ENCODE measurements at regions of chr11 and their contacts with region 1.

Region 1: GRCh38 chr11:119067371-119068222 is at the start of gene VPS11:
- DNase-seq: peak; percentile 98
- H3K4me3 Mint-ChIP-seq: peak within 1 kb of the TSS; percentile 98
- H3K27ac Mint-ChIP-seq: peak within 1 kb of the TSS; percentile 98
- H3K4me1 Mint-ChIP-seq: peaks cover 39% of the 10 kb centered on the region
- H3K27me3 Mint-ChIP-seq: no peaks in the 10 kb centered on the region
- total RNA-seq, gene VPS11: 30.6 to 36.1 TPM

Region 2: DNA sequence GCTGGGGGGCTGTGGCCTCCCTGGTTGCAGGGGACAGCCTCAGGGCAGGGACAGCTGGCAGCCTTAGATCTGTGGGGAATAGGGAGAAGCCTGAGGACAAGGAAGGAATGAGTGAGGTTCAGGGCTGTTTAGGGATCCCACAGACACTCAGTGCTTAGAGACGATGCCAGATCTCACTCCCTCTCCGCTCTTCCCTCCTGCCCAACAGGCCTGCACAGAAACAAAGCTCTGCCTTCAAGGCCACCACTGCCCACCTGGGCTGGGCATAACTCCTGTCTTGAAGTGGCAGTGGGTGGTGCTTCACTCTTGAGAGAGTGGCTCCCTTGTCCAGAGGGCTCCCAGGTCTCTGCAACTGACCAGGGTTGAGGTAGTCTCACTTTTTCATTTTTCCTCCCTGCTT is 82.8 kb before region 1 on chr11:
- CTCF ChIA-PET with region 1: no interaction called
- POLR2A ChIA-PET with region 1: no interaction called
- DNase-seq: no peak
- H3K4me3 Mint-ChIP-seq: no peak overlapping the region
- H3K27ac Mint-ChIP-seq: no peak overlapping the region
- H3K4me1 Mint-ChIP-seq: no peaks in the 10 kb centered on the region
- H3K27me3 Mint-ChIP-seq: no peaks in the 10 kb centered on the region

Region 3: GRCh38 chr11:118997627-118998387 is 69.8 kb before region 1 on chr11 and contains the start of gene CENATAC:
- CTCF ChIA-PET with region 1: no interaction called
- POLR2A ChIA-PET with region 1: interaction called, 10 read pairs
- DNase-seq: peak; percentile 98
- H3K4me3 Mint-ChIP-seq: peak within 1 kb of the TSS; percentile 99
- H3K27ac Mint-ChIP-seq: peak within 1 kb of the TSS; percentile 95
- H3K4me1 Mint-ChIP-seq: peaks cover 36% of the 10 kb centered on the region
- H3K27me3 Mint-ChIP-seq: no peaks in the 10 kb centered on the region
- total RNA-seq, gene CENATAC: 34.6 to 35.0 TPM

Region 4: DNA sequence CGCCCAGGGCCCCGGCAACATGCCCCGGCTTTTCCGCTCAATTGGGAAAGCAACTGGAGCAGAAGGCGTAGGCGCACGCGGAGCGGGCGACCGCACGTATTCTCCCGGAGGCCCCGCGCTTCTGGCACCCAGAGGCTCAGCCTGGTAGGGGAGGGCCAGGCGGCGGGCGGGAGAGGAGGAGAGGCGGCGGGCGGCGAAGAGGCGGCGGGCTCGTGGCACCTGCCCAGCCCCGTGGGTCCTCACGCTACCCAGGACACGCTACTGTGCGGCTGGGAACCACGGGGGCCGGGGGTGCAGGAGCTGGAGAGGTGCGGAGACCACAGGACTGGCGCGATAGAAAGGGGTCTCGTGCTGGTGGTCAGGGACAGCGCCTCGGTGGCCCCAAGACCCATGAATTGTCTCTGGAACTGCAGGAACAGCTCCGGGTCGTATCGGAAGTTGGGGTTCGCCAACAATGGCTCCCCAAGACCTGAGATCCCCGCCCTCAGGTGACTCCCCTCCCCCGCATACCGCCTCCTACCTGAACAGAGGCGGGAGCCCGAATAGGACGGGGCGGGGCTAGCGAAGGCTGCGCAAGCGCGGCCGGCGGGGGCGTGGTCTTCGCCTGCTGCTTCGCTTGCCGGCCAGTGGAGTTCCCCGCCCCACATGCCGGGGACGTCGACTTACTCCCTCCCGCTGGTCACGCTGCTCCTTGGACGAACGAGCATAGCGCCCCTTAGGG is 37.1 kb before region 1 on chr11 and contains the start of gene SLC37A4:
- CTCF ChIA-PET with region 1: interaction called, 7 read pairs
- POLR2A ChIA-PET with region 1: interaction called, 18 read pairs
- DNase-seq: peak; percentile 98
- H3K4me3 Mint-ChIP-seq: peak within 1 kb of the TSS; percentile 77
- H3K27ac Mint-ChIP-seq: peak within 1 kb of the TSS; percentile 78
- H3K4me1 Mint-ChIP-seq: peaks cover 29% of the 10 kb centered on the region
- H3K27me3 Mint-ChIP-seq: no peaks in the 10 kb centered on the region
- total RNA-seq, gene SLC37A4: 31.6 to 33.9 TPM

Region 5: DNA sequence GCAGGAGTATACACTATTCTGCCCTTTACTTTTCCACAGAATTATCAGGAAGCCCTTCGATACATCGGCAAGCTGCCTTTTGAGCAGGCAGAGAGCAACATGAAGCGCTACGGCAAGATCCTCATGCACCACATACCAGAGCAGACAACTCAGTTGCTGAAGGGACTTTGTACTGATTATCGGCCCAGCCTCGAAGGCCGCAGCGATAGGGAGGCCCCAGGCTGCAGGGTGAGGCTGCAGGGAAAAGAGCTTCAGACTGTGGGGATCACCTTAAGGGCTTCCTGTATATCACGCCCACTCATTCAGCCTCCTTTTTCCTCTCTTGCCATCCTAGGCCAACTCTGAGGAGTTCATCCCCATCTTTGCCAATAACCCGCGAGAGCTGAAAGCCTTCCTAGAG is 10.2 kb after region 1 on chr11:
- CTCF ChIA-PET with region 1: interaction called, 3 read pairs
- POLR2A ChIA-PET with region 1: interaction called, 14 read pairs
- DNase-seq: no peak
- H3K4me3 Mint-ChIP-seq: no peak overlapping the region
- H3K27ac Mint-ChIP-seq: no peak overlapping the region
- H3K4me1 Mint-ChIP-seq: no peaks in the 10 kb centered on the region
- H3K27me3 Mint-ChIP-seq: no peaks in the 10 kb centered on the region

Region 6: GRCh38 chr11:119095066-119095880 is 27.7 kb after region 1 on chr11:
- CTCF ChIA-PET with region 1: interaction called, 16 read pairs
- POLR2A ChIA-PET with region 1: interaction called, 105 read pairs
- DNase-seq: peak; percentile 100
- H3K4me3 Mint-ChIP-seq: peak overlapping the region; percentile 93
- H3K27ac Mint-ChIP-seq: peak overlapping the region; percentile 86
- H3K4me1 Mint-ChIP-seq: peaks cover 70% of the 10 kb centered on the region
- H3K27me3 Mint-ChIP-seq: no peaks in the 10 kb centered on the region

Region 7: GRCh38 chr11:119196833-119197483 is 129.4 kb after region 1 on chr11:
- CTCF ChIA-PET with region 1: interaction called, 14 read pairs
- POLR2A ChIA-PET with region 1: no interaction called
- DNase-seq: peak; percentile 70
- H3K4me3 Mint-ChIP-seq: no peak overlapping the region
- H3K27ac Mint-ChIP-seq: no peak overlapping the region
- H3K4me1 Mint-ChIP-seq: peaks cover 3% of the 10 kb centered on the region
- H3K27me3 Mint-ChIP-seq: peaks cover 6% of the 10 kb centered on the region

Region 8: DNA sequence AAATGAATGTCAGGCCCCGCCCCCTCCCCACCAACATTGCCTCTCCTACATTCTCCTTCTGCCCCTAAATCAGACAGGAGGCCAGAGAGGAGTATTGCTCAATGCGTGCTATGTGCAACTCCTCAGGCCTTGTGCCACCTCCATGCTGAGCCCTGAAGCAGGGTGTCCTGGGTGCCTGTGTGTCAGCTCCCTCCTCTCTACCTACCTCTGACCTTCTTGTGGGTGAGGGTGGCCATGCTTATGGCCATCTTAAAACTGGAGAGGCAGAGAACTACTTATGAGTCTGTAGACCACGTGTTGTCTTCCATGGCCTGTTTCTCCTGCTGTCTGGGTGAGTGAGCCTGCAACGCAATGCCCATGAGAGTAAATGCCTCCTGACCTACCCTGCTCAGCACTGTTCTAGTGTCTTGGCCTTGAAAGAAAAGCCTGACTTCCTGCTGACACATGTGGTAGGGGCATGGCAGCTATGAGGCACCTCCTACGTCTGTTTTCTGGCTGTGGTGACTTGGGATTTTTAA is 238.8 kb after region 1 on chr11:
- CTCF ChIA-PET with region 1: no interaction called
- POLR2A ChIA-PET with region 1: no interaction called
- DNase-seq: no peak
- H3K4me3 Mint-ChIP-seq: no peak overlapping the region
- H3K27ac Mint-ChIP-seq: peak overlapping the region; percentile 67
- H3K4me1 Mint-ChIP-seq: peaks cover 20% of the 10 kb centered on the region
- H3K27me3 Mint-ChIP-seq: no peaks in the 10 kb centered on the region

Measured in activated CD4-positive, alpha-beta memory T cell treated with anti-CD3 and anti-CD28 coated beads, Interleukin-2, amount 10 ng/mL, durations not matched to agents 7 days and 5 days (primary cell).